SK-N-SH (cell line): ENCODE measurements at regions of chr2 and their contacts with region 1.

Region 1: DNA sequence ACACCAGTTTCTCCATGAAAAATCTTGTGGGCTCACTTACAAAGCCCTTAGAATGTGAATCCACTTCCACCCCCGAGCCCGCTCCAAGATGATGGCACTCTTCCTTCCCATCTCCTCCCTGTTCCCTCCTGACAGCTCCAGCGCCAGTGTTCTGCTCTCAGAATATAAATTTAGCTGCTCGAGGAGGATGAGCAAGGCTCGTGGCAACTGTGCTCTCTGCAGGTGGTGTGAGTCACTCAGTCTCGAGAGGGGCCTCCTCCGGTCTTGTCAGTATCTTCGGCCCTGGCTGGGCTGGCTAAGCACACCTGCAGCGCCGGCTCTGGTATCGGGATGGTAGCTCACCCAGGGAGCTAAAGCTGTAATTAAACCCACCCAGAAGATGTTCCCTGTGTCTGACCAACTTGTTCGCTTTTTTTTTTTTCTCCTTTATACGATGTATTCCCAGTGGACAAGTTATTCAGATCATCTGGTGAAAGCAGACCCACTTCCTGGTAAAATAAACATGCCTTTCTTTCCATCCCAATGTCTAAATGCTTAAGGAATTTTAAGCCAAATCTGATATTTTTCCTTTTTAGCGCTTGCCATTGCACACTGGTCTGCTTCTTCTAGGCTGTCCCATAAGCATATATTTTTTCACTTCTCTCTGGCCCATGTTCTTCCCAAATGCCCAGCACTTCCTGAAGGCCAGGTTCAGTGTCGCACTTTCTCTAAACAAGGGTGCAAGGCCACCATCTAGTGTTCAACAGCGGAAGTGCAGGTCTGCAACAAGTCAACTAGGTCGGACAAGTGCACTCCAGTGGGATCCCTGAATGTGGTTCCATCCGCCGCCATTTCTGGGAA is 31.4 kb upstream of the YPEL5 start:
- DNase-seq: peak; percentile 86
- H3K4me3 ChIP-seq: peak overlapping the region in 1 of 2 experiments; percentile 7; a peak in 1 of 4 replicates
- H3K27ac ChIP-seq: peak overlapping the region in 1 of 2 experiments; percentile 85; a peak in 3 of 4 replicates
- H3K4me1 ChIP-seq: peaks cover 4 to 26% of the 10 kb centered on the region in 2 experiments; a peak in 3 of 4 replicates
- H3K27me3 ChIP-seq: no peaks in the 10 kb centered on the region
- CTCF ChIP-seq: peak; percentile 100
- EP300 ChIP-seq: peak in 1 of 2 experiments; percentile 94; a peak in 2 of 4 replicates
- RAD21 ChIP-seq: peak; percentile 99

Region 2: GRCh38 chr2:29871541-29871940 is 243.8 kb before region 1 on chr2:
- CTCF ChIA-PET with region 1: no interaction called
- POLR2A ChIA-PET with region 1: no interaction called
- DNase-seq: no peak
- H3K4me3 ChIP-seq: no peak overlapping the region
- H3K27ac ChIP-seq: no peak overlapping the region; a peak in 1 of 4 replicates
- H3K4me1 ChIP-seq: peaks cover 0 to 28% of the 10 kb centered on the region in 2 experiments; a peak in 1 of 4 replicates
- H3K27me3 ChIP-seq: no peaks in the 10 kb centered on the region
- CTCF ChIP-seq: no peak
- EP300 ChIP-seq: no peak
- RAD21 ChIP-seq: no peak

Region 3: GRCh38 chr2:29940706-29941105 is 174.7 kb before region 1 on chr2:
- CTCF ChIA-PET with region 1: no interaction called
- POLR2A ChIA-PET with region 1: no interaction called
- DNase-seq: no peak
- H3K4me3 ChIP-seq: no peak overlapping the region
- H3K27ac ChIP-seq: no peak overlapping the region
- H3K4me1 ChIP-seq: no peaks in the 10 kb centered on the region
- H3K27me3 ChIP-seq: peaks cover 7% of the 10 kb centered on the region
- CTCF ChIP-seq: no peak
- EP300 ChIP-seq: no peak
- RAD21 ChIP-seq: no peak

Region 4: DNA sequence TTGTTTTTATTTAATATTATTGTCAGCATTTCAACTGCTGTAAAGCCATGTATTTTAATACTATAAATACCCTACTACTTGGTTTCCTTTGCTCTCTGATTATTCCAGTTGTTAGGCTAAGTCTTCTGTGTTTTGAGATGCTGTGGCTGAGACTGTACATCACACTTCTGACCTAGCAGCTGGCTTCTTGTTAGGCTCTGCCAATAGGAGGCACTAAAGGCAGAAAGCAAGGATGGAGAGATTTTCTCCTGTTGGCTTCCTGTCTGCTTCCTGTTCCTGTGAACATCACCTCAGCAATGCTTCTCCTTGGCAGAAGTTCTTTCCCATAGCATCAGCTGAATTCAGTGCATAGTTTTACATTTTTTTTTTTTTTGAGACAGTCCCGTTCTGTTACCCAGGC is 36.8 kb before region 1 on chr2:
- CTCF ChIA-PET with region 1: interaction called, 25 read pairs
- POLR2A ChIA-PET with region 1: no interaction called
- DNase-seq: no peak
- H3K4me3 ChIP-seq: no peak overlapping the region
- H3K27ac ChIP-seq: no peak overlapping the region
- H3K4me1 ChIP-seq: no peaks in the 10 kb centered on the region
- H3K27me3 ChIP-seq: peaks cover 6% of the 10 kb centered on the region; the same call in 1 of the 2 replicates
- CTCF ChIP-seq: peak; percentile 16; the same call in 1 of the 2 replicates
- EP300 ChIP-seq: no peak
- RAD21 ChIP-seq: no peak

Region 5: GRCh38 chr2:30089171-30089570 is 26.2 kb before region 1 on chr2:
- CTCF ChIA-PET with region 1: interaction called, 104 read pairs
- POLR2A ChIA-PET with region 1: no interaction called
- DNase-seq: no peak
- H3K4me3 ChIP-seq: no peak overlapping the region
- H3K27ac ChIP-seq: no peak overlapping the region
- H3K4me1 ChIP-seq: no peaks in the 10 kb centered on the region; a peak in 1 of 4 replicates
- H3K27me3 ChIP-seq: no peaks in the 10 kb centered on the region
- CTCF ChIP-seq: no peak
- EP300 ChIP-seq: no peak
- RAD21 ChIP-seq: no peak

Region 6: GRCh38 chr2:30098266-30099005 is 16.9 kb before region 1 on chr2:
- CTCF ChIA-PET with region 1: interaction called, 15 read pairs
- POLR2A ChIA-PET with region 1: no interaction called
- DNase-seq: no peak
- H3K4me3 ChIP-seq: no peak overlapping the region
- H3K27ac ChIP-seq: no peak overlapping the region
- H3K4me1 ChIP-seq: peaks cover 0 to 11% of the 10 kb centered on the region in 2 experiments; a peak in 1 of 4 replicates
- H3K27me3 ChIP-seq: no peaks in the 10 kb centered on the region
- CTCF ChIP-seq: no peak
- EP300 ChIP-seq: no peak
- RAD21 ChIP-seq: no peak

Region 7: DNA sequence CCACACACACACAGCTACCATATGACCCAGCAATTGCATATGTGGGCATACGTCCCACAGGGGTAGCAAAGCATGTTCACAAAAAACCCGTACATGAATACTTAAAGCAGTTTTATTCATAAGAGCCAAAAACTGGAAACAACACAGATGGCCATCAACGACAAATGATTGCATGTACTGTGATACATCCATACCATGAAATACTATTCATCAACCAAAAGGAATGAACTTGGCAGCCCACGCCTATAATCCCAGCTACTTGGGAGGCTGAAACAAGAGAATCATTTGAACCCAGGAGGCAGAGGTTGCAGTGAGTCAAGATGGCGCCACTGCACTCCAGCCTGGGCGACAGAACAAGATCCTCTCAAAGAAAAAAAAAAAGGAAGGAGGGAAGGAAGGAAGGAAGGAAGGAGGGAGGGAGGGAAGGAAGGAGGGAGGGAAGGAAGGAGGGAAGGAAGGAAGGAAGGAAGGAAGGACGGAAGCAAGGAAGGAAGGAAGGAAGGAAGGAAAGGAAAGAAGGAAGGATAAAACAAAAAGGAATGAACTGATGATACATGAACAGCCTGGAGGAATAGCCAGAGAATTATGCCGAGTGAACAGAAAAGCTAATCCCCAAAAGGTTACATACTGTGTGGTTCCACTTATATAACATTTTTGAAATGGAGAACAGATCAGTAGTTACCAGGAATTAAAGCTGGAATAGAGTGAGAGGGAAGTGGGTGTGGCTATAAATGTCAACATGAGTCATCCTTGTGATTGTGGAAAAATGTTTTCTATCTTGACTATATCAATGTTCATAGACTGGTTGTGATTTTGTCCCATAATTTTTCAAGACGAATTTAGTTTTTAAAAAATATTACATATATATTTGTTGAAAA is 11.9 kb after region 1 on chr2:
- CTCF ChIA-PET with region 1: interaction called, 10 read pairs
- POLR2A ChIA-PET with region 1: no interaction called
- DNase-seq: no peak
- H3K4me3 ChIP-seq: no peak overlapping the region
- H3K27ac ChIP-seq: no peak overlapping the region
- H3K4me1 ChIP-seq: no peaks in the 10 kb centered on the region
- H3K27me3 ChIP-seq: no peaks in the 10 kb centered on the region
- CTCF ChIP-seq: no peak
- EP300 ChIP-seq: no peak
- RAD21 ChIP-seq: no peak

Region 8: DNA sequence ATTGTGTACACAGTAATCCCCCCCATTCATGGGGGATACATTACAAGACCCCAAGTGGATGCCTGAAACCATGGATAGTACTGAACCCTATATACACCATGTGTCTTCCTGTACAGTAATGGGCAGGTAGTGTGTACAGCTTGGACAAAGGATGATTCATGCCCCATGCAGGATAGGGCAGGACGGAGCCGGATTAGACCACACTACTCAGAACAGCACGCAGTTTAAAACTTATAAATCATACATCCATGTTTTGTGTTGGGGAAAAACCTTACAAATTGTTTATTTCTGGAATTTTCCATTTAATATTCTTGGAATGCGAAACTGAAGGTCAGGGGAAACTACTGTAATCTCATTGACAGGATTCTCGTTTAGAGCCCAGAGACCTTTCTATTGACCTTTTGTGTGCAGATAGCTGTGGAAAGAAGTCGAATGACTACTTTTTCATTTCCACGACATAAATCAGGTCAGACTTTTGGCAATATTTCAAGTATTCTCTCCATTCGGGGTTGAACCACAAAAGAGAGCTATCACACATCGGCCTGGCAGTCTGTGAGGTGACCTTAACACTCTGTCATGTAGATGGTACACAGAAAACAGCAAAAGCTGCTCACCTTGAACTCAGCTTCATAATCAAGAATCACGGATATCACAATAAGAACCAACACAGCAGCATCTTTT is 21.5 kb after region 1 on chr2:
- CTCF ChIA-PET with region 1: interaction called, 11 read pairs
- POLR2A ChIA-PET with region 1: no interaction called
- DNase-seq: no peak
- H3K4me3 ChIP-seq: no peak overlapping the region
- H3K27ac ChIP-seq: no peak overlapping the region
- H3K4me1 ChIP-seq: no peaks in the 10 kb centered on the region
- H3K27me3 ChIP-seq: no peaks in the 10 kb centered on the region
- CTCF ChIP-seq: no peak
- EP300 ChIP-seq: no peak
- RAD21 ChIP-seq: no peak